ENCODE measurements at regions of chr7 and their contacts with region 1.

Region 1: DNA sequence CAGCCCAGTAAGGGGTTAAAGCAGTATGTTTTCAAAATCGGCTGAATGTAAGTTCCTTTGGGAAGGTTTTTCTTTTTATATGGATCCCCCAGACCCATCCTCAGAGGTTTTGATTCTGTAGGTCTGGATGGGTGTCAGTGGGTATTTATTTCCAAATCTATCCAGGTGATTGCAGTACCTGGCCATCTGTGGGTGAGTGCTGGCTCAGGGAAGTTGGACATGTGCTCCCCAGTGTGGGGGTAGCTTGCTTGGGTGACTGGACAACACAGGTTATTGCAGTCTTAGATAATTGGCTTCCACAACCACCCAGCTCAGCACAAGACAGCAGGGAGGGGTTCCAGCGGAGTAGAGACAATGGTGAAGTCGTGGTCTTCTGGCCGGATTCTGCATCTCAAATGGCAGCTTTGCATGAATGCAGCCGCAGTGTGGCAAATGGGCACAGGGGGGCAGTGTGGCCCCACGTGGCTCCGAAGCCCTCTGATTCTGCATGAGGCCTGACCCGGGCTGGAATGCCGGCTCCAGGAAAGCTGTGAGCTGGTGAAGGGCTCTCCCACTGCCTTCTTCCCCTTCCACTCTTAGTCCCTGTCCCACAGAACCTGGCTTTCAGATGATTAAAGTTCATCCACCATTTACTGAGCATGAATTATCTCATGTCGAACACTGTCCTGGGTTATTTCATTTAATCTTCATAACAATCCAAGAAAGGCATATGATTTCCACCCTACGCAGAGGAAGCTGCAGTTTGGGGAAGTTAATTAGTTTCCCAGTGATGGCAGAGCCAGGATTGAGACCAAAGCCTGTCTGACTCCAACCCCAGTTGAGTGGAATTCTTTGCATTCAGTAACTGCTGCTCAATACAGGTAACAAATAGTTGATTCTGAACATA is 64.5 kb upstream of the SYPL1 start:
- DNase-seq: peak; percentile 52 to 80
- ATAC-seq: peak; percentile 79 to 92 (median 87)
- H3K4me3 ChIP-seq: no peak overlapping the region
- H3K4me3 Mint-ChIP-seq: no peak overlapping the region
- H3K27ac ChIP-seq: no peak overlapping the region
- H3K27ac Mint-ChIP-seq: no peak overlapping the region
- H3K4me1 ChIP-seq: peaks cover 2% of the 10 kb centered on the region
- H3K4me1 Mint-ChIP-seq: no peaks in the 10 kb centered on the region
- H3K27me3 ChIP-seq: peaks cover 4% of the 10 kb centered on the region
- H3K27me3 Mint-ChIP-seq: peaks cover 18 to 19% of the 10 kb centered on the region in 2 donors
- CTCF ChIP-seq: peak; percentile 86

Region 2: DNA sequence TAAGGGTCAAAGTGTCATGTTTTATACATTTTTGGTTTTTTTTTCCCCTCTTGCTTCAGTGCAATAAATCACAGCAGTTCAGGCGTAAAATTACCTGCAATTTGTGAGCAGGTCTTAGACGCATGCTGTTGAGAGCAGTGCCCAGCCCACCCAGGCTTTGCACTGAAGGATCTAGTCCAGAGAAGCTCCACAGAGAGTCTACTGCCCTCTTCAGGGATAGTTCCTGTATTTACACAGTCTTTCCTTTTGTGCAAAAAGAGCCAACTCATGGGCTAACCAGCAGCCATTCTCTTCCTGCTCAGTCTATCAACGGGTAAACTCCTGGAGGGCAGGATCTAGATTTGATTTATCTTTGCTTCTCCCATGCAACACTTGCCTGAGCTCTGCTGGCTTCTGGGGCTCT is 190.4 kb after region 1 on chr7:
- intact Hi-C with region 1: loop called (anchors 2 kb)
- DNase-seq: peak in 1 of 2 donors; percentile 26
- ATAC-seq: peak in 2 of 3 donors; percentile 52 to 79
- H3K4me3 ChIP-seq: no peak overlapping the region
- H3K4me3 Mint-ChIP-seq: no peak overlapping the region
- H3K27ac ChIP-seq: no peak overlapping the region
- H3K27ac Mint-ChIP-seq: no peak overlapping the region
- H3K4me1 ChIP-seq: no peaks in the 10 kb centered on the region
- H3K4me1 Mint-ChIP-seq: no peaks in the 10 kb centered on the region
- H3K27me3 ChIP-seq: no peaks in the 10 kb centered on the region
- H3K27me3 Mint-ChIP-seq: peaks cover 4 to 7% of the 10 kb centered on the region in 2 donors
- CTCF ChIP-seq: no peak

Region 3: GRCh38 chr7:106461993-106462859 is 285.6 kb after region 1 on chr7:
- intact Hi-C with region 1: loop called (anchors 1 kb)
- DNase-seq: peak in 1 of 2 donors; percentile 54
- ATAC-seq: peak in 1 of 3 donors; percentile 48
- H3K4me3 ChIP-seq: no peak overlapping the region
- H3K4me3 Mint-ChIP-seq: no peak overlapping the region
- H3K27ac ChIP-seq: no peak overlapping the region
- H3K27ac Mint-ChIP-seq: no peak overlapping the region
- H3K4me1 ChIP-seq: no peaks in the 10 kb centered on the region
- H3K4me1 Mint-ChIP-seq: no peaks in the 10 kb centered on the region
- H3K27me3 ChIP-seq: no peaks in the 10 kb centered on the region
- H3K27me3 Mint-ChIP-seq: no peaks in the 10 kb centered on the region
- CTCF ChIP-seq: peak; percentile 49

Region 4: DNA sequence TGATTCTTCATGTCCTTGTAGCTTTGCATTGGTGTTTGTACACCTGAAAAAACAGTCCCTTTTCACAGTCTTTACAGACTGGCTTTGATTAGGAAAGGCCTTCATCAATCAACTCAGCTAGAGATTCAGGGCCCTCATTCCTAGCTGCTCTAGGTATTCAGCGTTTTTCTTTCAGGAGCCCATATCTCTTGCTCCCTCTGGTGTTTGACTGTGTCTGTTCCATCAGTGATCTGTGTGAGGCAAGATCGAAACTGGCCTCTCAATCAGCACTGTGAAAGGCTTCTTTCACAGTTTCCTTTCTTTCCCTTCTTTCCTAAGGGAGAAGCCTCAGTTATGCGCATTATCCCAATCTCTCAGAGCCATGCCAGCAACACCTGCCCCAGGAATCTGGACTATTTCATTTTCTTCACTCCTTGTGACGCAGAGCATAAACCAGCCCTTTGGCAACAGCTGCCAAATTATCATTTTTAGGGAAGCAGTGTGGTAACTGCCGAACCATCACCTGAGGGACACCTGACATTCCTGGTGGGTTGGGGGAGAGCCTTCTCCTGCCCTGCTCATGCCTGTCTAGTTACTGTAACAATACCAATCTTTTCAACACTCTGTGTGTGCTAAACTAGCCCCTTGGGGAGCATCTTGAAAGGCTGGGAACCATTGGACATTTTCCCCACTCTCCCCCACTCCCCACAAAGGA is 560.0 kb after region 1 on chr7:
- intact Hi-C with region 1: loop called (anchors 1 kb)
- DNase-seq: peak in 1 of 2 donors; percentile 78
- ATAC-seq: peak; percentile 78 to 88 (median 82)
- H3K4me3 ChIP-seq: no peak overlapping the region
- H3K4me3 Mint-ChIP-seq: no peak overlapping the region
- H3K27ac ChIP-seq: no peak overlapping the region
- H3K27ac Mint-ChIP-seq: peak overlapping the region in 1 of 2 donors; percentile 23
- H3K4me1 ChIP-seq: peaks cover 11% of the 10 kb centered on the region
- H3K4me1 Mint-ChIP-seq: peaks cover 16 to 19% of the 10 kb centered on the region in 2 donors
- H3K27me3 ChIP-seq: no peaks in the 10 kb centered on the region
- H3K27me3 Mint-ChIP-seq: peaks cover 0 to 3% of the 10 kb centered on the region in 2 donors
- CTCF ChIP-seq: peak; percentile 64

Measured in natural killer cell (primary cell).